ENCODE measurements at regions of chr16 and their contacts with region 1.

Region 1: GRCh38 chr16:3003582-3004302 is 9.0 kb upstream of the CLDN9 start:
- DNase-seq: peak; percentile 78 to 98 (median 96)
- ATAC-seq: peak; percentile 99
- H3K4me3 ChIP-seq: no peak overlapping the region
- H3K4me3 Mint-ChIP-seq: peak overlapping the region; percentile 76 to 82 (median 80)
- H3K27ac ChIP-seq: no peak overlapping the region
- H3K27ac Mint-ChIP-seq: peak overlapping the region in 5 of 9 donors; percentile 41 to 81 (median 45)
- H3K4me1 ChIP-seq: peaks cover 19 to 21% of the 10 kb centered on the region in 2 donors
- H3K4me1 Mint-ChIP-seq: peaks cover 18 to 32% (median 25%) of the 10 kb centered on the region in 7 donors
- H3K27me3 ChIP-seq: no peaks in the 10 kb centered on the region
- H3K27me3 Mint-ChIP-seq: peaks cover 0 to 17% (median 0%) of the 10 kb centered on the region in 5 donors

Region 2: GRCh38 chr16:2968738-2969544 is 34.8 kb before region 1 on chr16 and contains the start of gene PAQR4:
- CTCF ChIA-PET with region 1: no interaction called
- POLR2A ChIA-PET with region 1: no interaction called
- intact Hi-C with region 1: loop called (anchors 1 to 2 kb)
- DNase-seq: peak; percentile 49 to 91 (median 71)
- ATAC-seq: peak; percentile 88
- H3K4me3 ChIP-seq: peak within 1 kb of the TSS; percentile 64
- H3K4me3 Mint-ChIP-seq: peak within 1 kb of the TSS; percentile 59 to 80 (median 75)
- H3K27ac ChIP-seq: no peak within 1 kb of the TSS
- H3K27ac Mint-ChIP-seq: peak within 1 kb of the TSS in 2 of 9 donors; percentile 16 to 70
- H3K4me1 ChIP-seq: peaks cover 19 to 28% of the 10 kb centered on the region in 2 donors
- H3K4me1 Mint-ChIP-seq: peaks cover 10 to 32% (median 24%) of the 10 kb centered on the region in 7 donors
- H3K27me3 ChIP-seq: peaks cover 0 to 28% of the 10 kb centered on the region in 2 donors
- H3K27me3 Mint-ChIP-seq: peaks cover 10 to 26% (median 16%) of the 10 kb centered on the region in 5 donors
- total RNA-seq, gene PAQR4: 0.40 to 39.4 (median 0.79) TPM

Region 3: GRCh38 chr16:3099732-3100499 is 96.2 kb after region 1 on chr16:
- CTCF ChIA-PET with region 1: no interaction called
- POLR2A ChIA-PET with region 1: interaction called, 3 read pairs
- intact Hi-C with region 1: loop called in 1 of 2 experiments (anchors 1 kb)
- DNase-seq: peak; percentile 67 to 94 (median 75)
- ATAC-seq: peak; percentile 94
- H3K4me3 ChIP-seq: peak overlapping the region; percentile 46
- H3K4me3 Mint-ChIP-seq: peak overlapping the region; percentile 71 to 98 (median 82)
- H3K27ac ChIP-seq: peak overlapping the region; percentile 35
- H3K27ac Mint-ChIP-seq: peak overlapping the region; percentile 74 to 93 (median 86)
- H3K4me1 ChIP-seq: peaks cover 25 to 31% of the 10 kb centered on the region in 2 donors
- H3K4me1 Mint-ChIP-seq: peaks cover 27 to 65% (median 54%) of the 10 kb centered on the region in 7 donors
- H3K27me3 ChIP-seq: no peaks in the 10 kb centered on the region
- H3K27me3 Mint-ChIP-seq: no peaks in the 10 kb centered on the region

Region 4: GRCh38 chr16:3264137-3265036 is 260.6 kb after region 1 on chr16:
- CTCF ChIA-PET with region 1: no interaction called
- POLR2A ChIA-PET with region 1: no interaction called
- intact Hi-C with region 1: no loop called
- DNase-seq: peak; percentile 88 to 97 (median 96)
- ATAC-seq: peak; percentile 88
- H3K4me3 ChIP-seq: peak overlapping the region; percentile 81
- H3K4me3 Mint-ChIP-seq: peak overlapping the region; percentile 84 to 97 (median 93)
- H3K27ac ChIP-seq: peak overlapping the region; percentile 92
- H3K27ac Mint-ChIP-seq: peak overlapping the region; percentile 93 to 98 (median 97)
- H3K4me1 ChIP-seq: peaks cover 18 to 20% of the 10 kb centered on the region in 2 donors
- H3K4me1 Mint-ChIP-seq: peaks cover 6 to 42% (median 29%) of the 10 kb centered on the region in 7 donors
- H3K27me3 ChIP-seq: no peaks in the 10 kb centered on the region
- H3K27me3 Mint-ChIP-seq: no peaks in the 10 kb centered on the region

Region 5: GRCh38 chr16:3503523-3503922 is 499.8 kb after region 1 on chr16:
- CTCF ChIA-PET with region 1: no interaction called
- POLR2A ChIA-PET with region 1: no interaction called
- intact Hi-C with region 1: loop called in 1 of 2 experiments (anchors 1 kb)
- DNase-seq: peak in 8 of 9 donors; percentile 50 to 81 (median 70)
- ATAC-seq: peak; percentile 49
- H3K4me3 ChIP-seq: peak overlapping the region; percentile 3
- H3K4me3 Mint-ChIP-seq: peak overlapping the region; percentile 76 to 94 (median 84)
- H3K27ac ChIP-seq: peak overlapping the region; percentile 92
- H3K27ac Mint-ChIP-seq: peak overlapping the region; percentile 90 to 98 (median 95)
- H3K4me1 ChIP-seq: peaks cover 40 to 47% of the 10 kb centered on the region in 2 donors
- H3K4me1 Mint-ChIP-seq: peaks cover 37 to 80% (median 67%) of the 10 kb centered on the region in 7 donors
- H3K27me3 ChIP-seq: no peaks in the 10 kb centered on the region
- H3K27me3 Mint-ChIP-seq: no peaks in the 10 kb centered on the region

Measured in naive thymus-derived CD4-positive, alpha-beta T cell (primary cell).